ENCODE measurements at regions of chr19 and their contacts with region 1.

Region 1: DNA sequence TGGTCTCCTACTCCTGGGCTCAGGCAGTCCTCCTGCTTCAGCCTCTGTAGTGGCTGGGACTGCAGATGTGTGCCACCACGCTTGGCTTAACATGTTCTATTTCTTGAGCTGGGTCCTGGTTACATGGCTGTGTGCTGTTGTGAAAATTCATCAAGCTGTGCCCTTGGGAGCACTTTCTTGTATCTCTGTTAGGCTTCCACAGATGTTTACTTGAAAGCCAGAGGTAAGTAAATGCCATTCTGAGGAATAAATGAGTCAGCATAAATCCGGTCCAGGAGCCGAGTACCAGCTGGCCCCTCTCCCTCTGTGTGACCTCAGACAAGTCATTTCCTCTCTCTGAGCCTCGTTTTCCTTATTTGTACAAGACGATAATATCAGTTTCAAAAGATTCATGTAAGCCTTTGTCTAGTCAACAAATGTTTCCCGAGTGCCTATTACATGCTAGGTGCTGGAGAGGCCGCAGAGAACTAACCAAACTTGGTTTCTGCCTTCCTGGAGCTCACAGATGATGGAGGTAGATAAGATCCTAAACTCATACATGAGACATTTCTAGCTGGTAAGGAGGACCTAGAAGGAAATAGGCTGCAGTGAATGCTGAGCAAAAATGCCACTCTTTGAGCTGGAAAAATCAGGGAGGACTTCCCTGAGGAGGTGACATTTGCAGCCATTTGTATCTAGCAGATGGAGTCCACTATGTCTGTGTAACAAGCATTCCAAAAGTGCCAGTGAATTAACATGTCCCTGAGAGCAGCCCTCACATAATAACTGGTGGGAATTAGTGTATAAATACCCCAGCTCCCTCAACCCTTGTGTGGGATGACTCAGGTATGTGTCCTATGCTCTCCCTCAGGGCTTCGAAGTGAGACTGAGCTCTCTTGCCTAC is 2.7 kb upstream of the RASAL3 start:
- DNase-seq: peak; percentile 22 to 72 (median 38)
- H3K4me3 ChIP-seq: no peak overlapping the region
- H3K4me3 Mint-ChIP-seq: peak overlapping the region; percentile 58 to 89 (median 76)
- H3K27ac ChIP-seq: no peak overlapping the region
- H3K27ac Mint-ChIP-seq: peak overlapping the region; percentile 82 to 98 (median 90)
- H3K4me1 ChIP-seq: peaks cover 60% of the 10 kb centered on the region
- H3K4me1 Mint-ChIP-seq: peaks cover 52 to 72% (median 65%) of the 10 kb centered on the region in 3 donors
- H3K27me3 ChIP-seq: no peaks in the 10 kb centered on the region
- H3K27me3 Mint-ChIP-seq: peaks cover 0 to 3% of the 10 kb centered on the region in 2 donors

Region 2: GRCh38 chr19:15439078-15439799 is 27.9 kb before region 1 on chr19:
- CTCF ChIA-PET with region 1: no interaction called
- POLR2A ChIA-PET with region 1: no interaction called
- DNase-seq: no peak
- H3K4me3 ChIP-seq: no peak overlapping the region
- H3K4me3 Mint-ChIP-seq: no peak overlapping the region
- H3K27ac ChIP-seq: no peak overlapping the region
- H3K27ac Mint-ChIP-seq: no peak overlapping the region
- H3K4me1 ChIP-seq: no peaks in the 10 kb centered on the region
- H3K4me1 Mint-ChIP-seq: peaks cover 0 to 1% (median 0%) of the 10 kb centered on the region in 3 donors
- H3K27me3 ChIP-seq: no peaks in the 10 kb centered on the region
- H3K27me3 Mint-ChIP-seq: no peaks in the 10 kb centered on the region

Region 3: GRCh38 chr19:15449620-15450527 is 17.2 kb before region 1 on chr19 and contains the start of gene WIZ:
- CTCF ChIA-PET with region 1: interaction called, 23 read pairs
- POLR2A ChIA-PET with region 1: interaction called, 7 read pairs
- DNase-seq: peak; percentile 76 to 89 (median 85)
- H3K4me3 ChIP-seq: peak within 1 kb of the TSS; percentile 23
- H3K4me3 Mint-ChIP-seq: peak within 1 kb of the TSS; percentile 79 to 94 (median 82)
- H3K27ac ChIP-seq: peak within 1 kb of the TSS; percentile 27
- H3K27ac Mint-ChIP-seq: peak within 1 kb of the TSS; percentile 90 to 98 (median 96)
- H3K4me1 ChIP-seq: peaks cover 6% of the 10 kb centered on the region
- H3K4me1 Mint-ChIP-seq: peaks cover 25 to 37% (median 28%) of the 10 kb centered on the region in 3 donors
- H3K27me3 ChIP-seq: no peaks in the 10 kb centered on the region
- H3K27me3 Mint-ChIP-seq: peaks cover 0 to 8% of the 10 kb centered on the region in 2 donors
- total RNA-seq, gene WIZ: 28.9 to 31.2 TPM